ENCODE measurements at regions of chr14 and their contacts with region 1.

Region 1: GRCh38 chr14:75452900-75453747 is 25.3 kb downstream of the JDP2 start:
- DNase-seq: no peak
- H3K4me3 Mint-ChIP-seq: no peak overlapping the region
- H3K27ac Mint-ChIP-seq: no peak overlapping the region
- H3K4me1 Mint-ChIP-seq: peaks cover 4% of the 10 kb centered on the region
- H3K27me3 Mint-ChIP-seq: no peaks in the 10 kb centered on the region

Region 2: DNA sequence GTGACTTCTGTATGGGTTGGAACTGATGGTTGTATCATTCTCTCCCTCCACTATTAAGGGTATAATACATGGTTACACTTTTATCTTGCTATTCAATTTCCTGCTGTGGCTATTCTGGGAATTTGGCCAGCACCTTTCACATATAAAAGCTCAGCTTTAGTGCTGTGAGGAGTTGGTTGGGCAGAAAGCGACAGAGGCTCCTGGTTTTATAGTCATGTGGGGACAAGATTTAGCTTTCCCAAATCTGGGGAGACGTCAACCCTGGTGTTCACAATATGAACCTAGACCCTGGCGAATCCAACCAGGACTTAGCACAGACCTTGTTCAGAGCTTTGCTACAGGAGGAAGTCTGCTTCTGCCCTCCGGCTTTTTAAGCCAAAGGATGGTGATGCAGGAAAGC is 138.0 kb before region 1 on chr14:
- CTCF ChIA-PET with region 1: interaction called, 81 read pairs
- DNase-seq: no peak
- H3K4me3 Mint-ChIP-seq: no peak overlapping the region
- H3K27ac Mint-ChIP-seq: no peak overlapping the region
- H3K4me1 Mint-ChIP-seq: peaks cover 5% of the 10 kb centered on the region
- H3K27me3 Mint-ChIP-seq: peaks cover 27% of the 10 kb centered on the region

Region 3: GRCh38 chr14:75442642-75443041 is 10.5 kb before region 1 on chr14:
- CTCF ChIA-PET with region 1: interaction called, 11 read pairs
- DNase-seq: no peak
- H3K4me3 Mint-ChIP-seq: no peak overlapping the region
- H3K27ac Mint-ChIP-seq: no peak overlapping the region
- H3K4me1 Mint-ChIP-seq: peaks cover 6% of the 10 kb centered on the region
- H3K27me3 Mint-ChIP-seq: no peaks in the 10 kb centered on the region

Region 4: GRCh38 chr14:75514673-75515628 is 61.8 kb after region 1 on chr14:
- CTCF ChIA-PET with region 1: no interaction called
- DNase-seq: peak; percentile 53
- H3K4me3 Mint-ChIP-seq: peak overlapping the region; percentile 60
- H3K27ac Mint-ChIP-seq: peak overlapping the region; percentile 58
- H3K4me1 Mint-ChIP-seq: peaks cover 22% of the 10 kb centered on the region
- H3K27me3 Mint-ChIP-seq: peaks cover 4% of the 10 kb centered on the region

Measured in activated naive CD4-positive, alpha-beta T cell treated with anti-CD3 and anti-CD28 coated beads, Interleukin-2, amount 10 ng/mL, durations not matched to agents 7 days and 5 days (primary cell).